PC-9 (cell line): ENCODE measurements at regions of chr19 and their contacts with region 1.

Region 1: GRCh38 chr19:45717166-45717982 is 13.3 kb downstream of the FBXO46 start:
- DNase-seq: peak; percentile 99
- H3K4me3 ChIP-seq: peak overlapping the region; percentile 87
- H3K27ac ChIP-seq: peak overlapping the region; percentile 75
- H3K4me1 ChIP-seq: peaks cover 35% of the 10 kb centered on the region
- H3K27me3 ChIP-seq: no peaks in the 10 kb centered on the region
- CTCF ChIP-seq: no peak; the same call in 1 of the 2 replicates

Region 2: GRCh38 chr19:44635581-44636438 is 1081.6 kb before region 1 on chr19:
- CTCF ChIA-PET with region 1: interaction called, 11 read pairs
- POLR2A ChIA-PET with region 1: no interaction called
- intact Hi-C with region 1: no loop called
- DNase-seq: peak in 1 of 2 experiments; percentile 58
- H3K4me3 ChIP-seq: no peak overlapping the region
- H3K27ac ChIP-seq: peak overlapping the region; percentile 35
- H3K4me1 ChIP-seq: peaks cover 46% of the 10 kb centered on the region
- H3K27me3 ChIP-seq: no peaks in the 10 kb centered on the region
- CTCF ChIP-seq: no peak

Region 3: DNA sequence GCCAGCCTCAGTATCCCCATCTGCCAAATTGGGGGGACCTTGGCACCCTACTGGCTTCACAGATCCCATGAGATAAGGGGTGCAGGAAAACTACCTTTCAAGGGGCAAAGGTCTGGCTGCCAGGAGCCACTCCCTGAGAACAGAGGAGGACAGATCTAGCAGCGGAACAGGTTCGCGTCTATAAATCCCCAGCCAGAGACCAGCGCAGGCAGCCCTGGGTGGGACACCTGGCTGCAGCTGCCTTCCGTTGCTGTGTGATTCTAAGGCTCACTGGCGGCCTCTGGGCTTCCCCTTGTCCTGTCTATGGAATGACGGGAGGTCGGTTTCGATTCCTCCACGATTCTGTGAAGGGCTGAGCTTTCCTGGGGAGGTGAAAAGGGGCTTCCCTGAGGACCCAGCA is 708.8 kb before region 1 on chr19:
- CTCF ChIA-PET with region 1: interaction called, 14 read pairs
- POLR2A ChIA-PET with region 1: no interaction called
- intact Hi-C with region 1: no loop called
- DNase-seq: no peak
- H3K4me3 ChIP-seq: no peak overlapping the region
- H3K27ac ChIP-seq: no peak overlapping the region
- H3K4me1 ChIP-seq: no peaks in the 10 kb centered on the region
- H3K27me3 ChIP-seq: no peaks in the 10 kb centered on the region
- CTCF ChIP-seq: no peak

Region 4: DNA sequence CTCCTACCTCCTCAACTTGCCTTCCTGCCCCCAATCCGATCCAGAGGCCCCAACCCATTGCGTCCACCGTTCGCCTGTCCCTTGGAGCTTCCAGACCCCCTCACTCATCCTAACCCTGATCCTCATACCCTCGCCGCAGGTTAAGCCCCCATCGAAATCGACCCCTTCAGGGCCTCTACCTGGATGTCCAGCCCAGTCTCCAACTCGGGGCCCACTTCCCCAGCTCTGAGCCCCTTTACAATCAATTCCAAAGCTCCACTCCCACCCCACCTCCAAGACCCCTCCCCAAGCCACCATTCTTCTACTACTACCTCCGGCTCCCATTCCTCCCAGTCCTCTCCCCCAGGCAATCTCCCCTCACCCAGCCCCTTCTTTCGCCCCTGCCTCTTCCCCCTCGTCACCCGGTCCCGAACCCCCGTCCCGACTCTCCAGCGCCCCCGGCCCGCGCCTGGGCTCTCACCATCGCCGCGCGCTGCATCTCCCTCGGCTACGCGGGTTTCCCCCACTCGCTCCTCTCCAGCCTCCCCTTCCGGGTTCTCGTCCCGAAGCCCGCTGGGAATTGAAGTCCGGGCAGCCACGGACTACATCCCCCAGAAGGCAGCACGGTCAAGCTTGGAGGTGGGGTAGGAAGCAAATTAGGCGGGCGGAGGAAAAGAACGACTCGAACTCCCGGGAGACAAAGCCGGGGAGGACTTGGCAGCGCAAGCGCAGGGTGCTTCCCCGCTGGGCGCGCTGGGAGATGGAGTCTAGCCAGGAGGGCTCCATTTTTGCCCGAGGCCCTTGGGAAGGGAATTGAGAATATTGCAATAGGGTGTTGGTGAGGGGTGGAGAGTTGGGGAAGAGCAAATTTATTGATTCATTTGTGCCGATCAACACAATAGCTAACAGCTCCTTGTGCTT is 13.3 kb after region 1 on chr19 and contains the start of gene FBXO46:
- CTCF ChIA-PET with region 1: interaction called, 11 read pairs
- POLR2A ChIA-PET with region 1: interaction called, 29 read pairs
- intact Hi-C with region 1: no loop called
- DNase-seq: peak; percentile 94 to 97
- H3K4me3 ChIP-seq: peak within 1 kb of the TSS; percentile 93
- H3K27ac ChIP-seq: peak within 1 kb of the TSS; percentile 46
- H3K4me1 ChIP-seq: peaks cover 9% of the 10 kb centered on the region
- H3K27me3 ChIP-seq: no peaks in the 10 kb centered on the region
- CTCF ChIP-seq: no peak; the same call in 1 of the 2 replicates
- total RNA-seq, gene FBXO46: 33.3 and 45.5 TPM in 2 replicates

Region 5: DNA sequence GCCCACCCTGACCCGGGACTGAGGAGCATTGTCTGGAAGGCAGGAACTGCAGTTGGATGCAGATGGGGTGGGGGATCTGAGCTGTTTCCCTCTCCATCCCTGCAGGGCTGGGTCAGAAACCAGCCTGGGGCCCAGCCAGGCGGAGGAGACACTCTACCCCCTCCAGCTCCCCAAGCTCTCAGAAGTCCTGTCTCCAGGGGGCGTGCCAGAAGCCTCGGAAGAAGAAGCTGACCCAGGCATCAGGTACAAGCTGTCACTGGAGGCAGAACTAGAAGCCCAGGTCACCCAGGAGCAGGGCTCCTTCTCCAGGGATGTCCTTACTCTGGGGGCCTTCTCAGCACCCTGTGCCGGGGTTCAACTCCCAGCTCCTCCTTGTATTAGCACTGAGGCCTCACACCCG is 36.2 kb after region 1 on chr19:
- CTCF ChIA-PET with region 1: no interaction called
- POLR2A ChIA-PET with region 1: interaction called, 25 read pairs
- intact Hi-C with region 1: no loop called
- DNase-seq: no peak
- H3K4me3 ChIP-seq: no peak overlapping the region
- H3K27ac ChIP-seq: no peak overlapping the region
- H3K4me1 ChIP-seq: peaks cover 17% of the 10 kb centered on the region
- H3K27me3 ChIP-seq: no peaks in the 10 kb centered on the region
- CTCF ChIP-seq: no peak; the same call in 1 of the 2 replicates